ENCODE measurements at regions of chr19 and their contacts with region 1.

Region 1: DNA sequence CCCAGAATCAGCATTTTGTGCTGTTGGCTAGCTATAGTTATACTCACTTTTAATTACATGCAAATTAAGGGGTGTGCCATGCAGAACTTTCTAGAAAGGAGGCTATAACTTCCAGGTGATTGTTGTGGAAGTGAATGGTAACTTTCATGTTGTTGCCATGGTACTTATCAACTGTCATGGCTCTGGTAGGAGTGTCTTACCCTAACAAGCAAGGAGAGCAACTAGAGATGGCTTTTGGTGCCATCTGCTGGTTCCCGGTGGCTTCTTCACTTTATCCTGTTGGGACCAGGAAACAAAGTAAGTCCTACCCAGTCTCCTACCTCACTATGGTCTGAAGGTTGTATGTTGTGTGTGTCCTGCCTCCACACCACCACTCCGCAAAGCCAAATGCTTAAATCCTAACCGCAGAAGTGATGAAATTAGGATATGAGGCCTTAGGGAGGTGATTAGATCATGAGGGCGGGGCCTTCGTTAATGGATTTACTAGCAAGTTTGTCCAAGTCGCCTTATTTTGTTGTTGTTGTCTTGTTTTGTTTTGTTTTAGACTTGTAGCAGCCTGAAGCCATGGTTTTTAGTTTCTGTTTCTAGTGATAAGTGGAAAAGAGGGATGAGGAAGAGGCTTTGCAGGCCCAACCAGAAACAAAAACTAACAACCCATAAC is 22.6 kb downstream of the FBXL12 start:
- DNase-seq: peak; percentile 87
- ATAC-seq: peak; percentile 25

Region 2: GRCh38 chr19:9621156-9622037 is 174.8 kb before region 1 on chr19 and contains the start of gene ZNF561:
- intact Hi-C with region 1: loop called (anchors 10 kb)
- DNase-seq: peak; percentile 93
- ATAC-seq: peak; percentile 98
- total RNA-seq, gene ZNF561: 33.8 TPM

Region 3: GRCh38 chr19:9903336-9903735 is 107.1 kb after region 1 on chr19:
- intact Hi-C with region 1: no loop called
- DNase-seq: no peak
- ATAC-seq: no peak